ENCODE measurements at regions of chr21 and their contacts with region 1.

Region 1: GRCh38 chr21:24514081-24514733 is 1093.1 kb downstream of the MRPL39 start:
- DNase-seq: no peak

Region 2: DNA sequence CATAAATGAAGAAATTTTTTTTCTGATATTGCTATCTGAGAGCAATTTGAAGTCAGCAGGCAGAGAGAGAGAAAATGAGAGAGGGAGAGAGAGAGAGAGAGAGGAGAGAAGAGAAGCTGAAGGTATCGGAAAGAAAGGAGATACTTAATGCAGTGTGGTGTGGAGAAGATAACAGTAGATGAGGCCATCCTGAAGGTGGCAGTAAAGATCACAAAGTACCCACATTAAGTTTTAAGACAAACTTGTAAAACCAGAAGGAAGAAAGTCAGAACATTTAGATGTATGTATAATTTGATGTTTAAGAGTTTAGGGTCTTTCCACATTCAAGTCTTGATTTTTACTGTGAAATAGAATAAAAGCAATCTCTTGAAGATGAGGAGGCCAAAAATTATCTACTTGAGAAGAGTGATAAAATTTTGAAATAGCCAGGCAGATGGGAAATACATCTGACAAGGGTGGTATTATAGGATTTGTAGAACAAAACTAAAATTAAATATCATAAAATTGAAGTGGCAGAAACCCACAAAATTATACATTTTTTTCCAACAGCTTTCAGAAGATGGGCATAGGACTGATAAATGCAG is 660.3 kb before region 1 on chr21:
- intact Hi-C with region 1: loop called (anchors 2 kb)
- DNase-seq: no peak

Region 3: GRCh38 chr21:24045775-24046215 is 468.4 kb before region 1 on chr21:
- intact Hi-C with region 1: loop called (anchors 10 kb)
- DNase-seq: peak; percentile 86 to 99 (median 92)

Region 4: DNA sequence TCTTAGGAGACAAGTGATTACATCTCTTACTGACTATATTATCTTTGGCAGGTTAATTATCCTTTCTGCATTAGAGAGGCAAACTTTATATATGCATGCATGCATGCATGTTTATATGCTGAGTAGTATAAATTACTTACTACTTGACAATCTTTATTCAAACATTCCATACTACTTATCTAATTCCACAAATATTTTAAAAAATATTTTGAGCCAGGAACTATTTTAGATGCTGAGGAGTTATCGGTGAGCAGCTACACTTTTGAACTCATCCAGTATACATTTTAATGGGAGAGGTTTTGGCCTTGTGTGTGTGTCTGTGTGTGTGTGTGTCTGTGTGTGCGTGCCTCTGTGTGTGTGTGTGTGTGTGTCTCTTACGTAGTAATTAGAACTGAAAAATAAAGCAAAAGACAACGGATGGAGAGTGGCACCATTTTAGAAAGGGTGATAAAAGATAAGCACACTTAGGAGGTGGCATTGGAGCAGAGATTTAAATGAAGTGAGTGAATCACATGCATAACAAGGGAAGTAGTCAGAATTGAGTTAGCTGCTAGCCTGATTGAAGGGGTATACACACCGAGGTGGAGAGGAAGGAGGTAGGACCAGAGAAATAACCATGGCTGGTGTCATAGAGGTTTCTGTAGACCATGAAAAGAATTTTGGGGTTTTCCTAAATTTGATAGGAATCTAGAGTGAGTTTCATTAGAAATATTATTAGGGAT is 395.3 kb before region 1 on chr21:
- intact Hi-C with region 1: loop called (anchors 5 kb)
- DNase-seq: no peak

Region 5: DNA sequence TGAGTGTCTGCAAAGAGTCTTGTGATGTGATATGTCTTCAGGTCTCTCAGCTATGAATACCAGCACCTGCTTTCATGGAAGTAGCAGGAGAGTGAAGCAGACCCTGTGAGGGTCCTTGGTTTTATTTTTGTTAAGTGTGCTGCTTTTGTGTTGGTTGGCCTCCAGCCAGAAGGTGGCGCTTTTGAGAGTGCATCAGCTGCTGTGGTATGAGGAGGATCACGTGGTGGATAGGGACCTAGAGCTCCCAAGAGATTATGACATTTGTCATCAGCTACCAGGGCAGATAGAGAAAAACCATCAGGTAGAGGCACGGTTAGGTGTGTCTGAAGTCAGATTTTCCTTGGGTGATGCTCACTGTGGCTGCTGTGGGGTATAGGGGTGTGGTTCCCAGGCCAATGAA is 139.0 kb before region 1 on chr21:
- intact Hi-C with region 1: no loop called
- DNase-seq: no peak

Measured in posterior cingulate gyrus (tissue), 11 donors.